HEK293 (cell line): ENCODE measurements at regions of chr6 and their contacts with region 1.

Region 1: GRCh38 chr6:42661540-42662153 is 60.8 kb downstream of the PRPH2 start:
- H3K4me3 ChIP-seq: no peak overlapping the region
- H3K27ac ChIP-seq: no peak overlapping the region
- H3K4me1 ChIP-seq: no peaks in the 10 kb centered on the region
- CTCF ChIP-seq: peak; percentile 47; the same call in 1 of the 2 replicates

Region 2: DNA sequence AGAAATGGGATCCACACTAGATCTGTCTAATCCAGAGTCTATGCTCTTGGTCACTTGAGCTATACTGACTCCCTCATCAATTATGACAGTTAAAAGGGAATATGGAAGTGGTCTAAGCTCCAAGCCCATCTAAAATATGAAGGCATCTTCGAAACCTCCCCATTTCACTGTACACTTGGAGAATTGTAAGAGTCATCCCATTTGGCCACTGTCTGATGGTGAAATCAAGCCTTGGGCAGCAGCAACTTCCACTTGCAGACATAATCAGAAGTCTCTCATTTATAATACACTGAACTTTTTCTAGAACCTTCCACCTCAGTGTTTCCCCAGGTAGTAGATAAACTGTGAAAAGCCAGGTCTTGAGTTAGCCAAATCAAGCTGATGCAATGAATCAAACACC is 124.1 kb before region 1 on chr6:
- CTCF ChIA-PET with region 1: no interaction called
- POLR2A ChIA-PET with region 1: no interaction called
- H3K4me3 ChIP-seq: no peak overlapping the region
- H3K27ac ChIP-seq: no peak overlapping the region
- H3K4me1 ChIP-seq: 0 out of 2 replicates have a peak, but pooled peaks cover 3% of the 10 kb centered on the region
- CTCF ChIP-seq: no peak

Region 3: GRCh38 chr6:42629845-42630244 is 31.8 kb before region 1 on chr6:
- CTCF ChIA-PET with region 1: interaction called, 15 read pairs
- POLR2A ChIA-PET with region 1: no interaction called
- H3K4me3 ChIP-seq: no peak overlapping the region
- H3K27ac ChIP-seq: no peak overlapping the region
- H3K4me1 ChIP-seq: no peaks in the 10 kb centered on the region
- CTCF ChIP-seq: no peak

Region 4: GRCh38 chr6:42674780-42675179 is 13.1 kb after region 1 on chr6:
- CTCF ChIA-PET with region 1: interaction called, 91 read pairs
- POLR2A ChIA-PET with region 1: no interaction called
- H3K4me3 ChIP-seq: no peak overlapping the region
- H3K27ac ChIP-seq: no peak overlapping the region
- H3K4me1 ChIP-seq: peaks cover 8% of the 10 kb centered on the region; the same call in 1 of the 2 replicates
- CTCF ChIP-seq: no peak

Region 5: GRCh38 chr6:42692137-42692911 is 30.7 kb after region 1 on chr6:
- CTCF ChIA-PET with region 1: interaction called, 14 read pairs
- POLR2A ChIA-PET with region 1: no interaction called
- H3K4me3 ChIP-seq: no peak overlapping the region
- H3K27ac ChIP-seq: no peak overlapping the region
- H3K4me1 ChIP-seq: no peaks in the 10 kb centered on the region
- CTCF ChIP-seq: no peak

Region 6: DNA sequence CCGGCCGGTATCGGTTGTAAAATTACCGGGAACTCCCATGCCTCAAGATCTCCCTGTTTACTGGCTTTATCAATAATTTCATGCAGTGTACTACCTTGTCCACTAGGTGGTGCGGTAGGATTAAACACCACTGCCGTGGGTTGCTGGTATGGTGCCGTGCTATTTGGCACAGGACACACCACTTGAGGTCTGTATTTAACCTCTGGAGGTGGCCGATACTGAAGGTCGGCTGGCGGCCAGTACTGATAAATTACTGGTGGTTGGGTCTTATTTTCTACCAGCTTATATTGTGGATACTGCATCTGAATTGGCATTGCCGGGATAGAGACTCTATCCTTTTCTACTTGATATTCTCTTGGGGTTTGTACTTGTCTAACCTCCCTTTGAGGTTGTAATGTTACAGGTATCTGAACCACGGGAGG is 239.9 kb after region 1 on chr6:
- CTCF ChIA-PET with region 1: interaction called, 15 read pairs
- POLR2A ChIA-PET with region 1: no interaction called
- H3K4me3 ChIP-seq: no peak overlapping the region
- H3K27ac ChIP-seq: no peak overlapping the region
- H3K4me1 ChIP-seq: no peaks in the 10 kb centered on the region; the same call in 1 of the 2 replicates
- CTCF ChIP-seq: peak; percentile 85